ENCODE measurements at regions of chr3 and their contacts with region 1.

Region 1: DNA sequence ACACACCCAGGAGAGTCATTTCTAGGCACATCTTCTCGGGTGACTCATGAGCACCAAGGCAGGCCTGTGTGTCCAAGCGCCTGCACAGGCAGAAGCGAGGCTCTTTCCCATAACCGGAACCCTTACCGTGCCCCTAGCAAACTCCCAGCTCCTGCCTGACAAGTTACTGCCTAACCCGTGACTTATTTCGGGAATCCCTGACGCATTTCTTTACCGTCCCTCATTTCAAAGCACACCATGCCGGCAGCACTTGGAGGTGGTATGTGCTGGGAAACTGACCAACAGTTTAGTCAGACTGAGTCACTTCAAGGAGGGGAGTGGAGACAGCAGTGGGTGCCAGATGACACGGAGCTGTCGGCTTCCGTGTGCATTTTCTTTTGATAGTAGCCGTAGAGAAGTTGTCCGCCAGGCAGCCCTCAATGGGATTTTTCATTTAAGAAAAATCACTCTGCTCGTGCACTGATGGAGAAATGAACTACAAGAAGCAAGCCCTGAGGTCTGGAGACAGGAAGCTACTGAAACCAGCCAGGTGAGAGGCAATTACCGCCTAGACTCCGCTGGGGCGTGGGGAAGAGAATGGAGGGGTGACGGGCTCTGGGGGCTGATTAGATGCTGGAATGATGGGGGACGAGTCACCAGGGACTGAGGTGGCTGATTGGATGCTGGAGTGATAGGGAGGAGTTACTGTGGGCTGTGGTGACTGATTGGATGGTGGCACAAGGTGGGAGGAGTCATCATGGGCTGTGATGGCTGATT is 17.2 kb upstream of the HRH1 start:
- DNase-seq: peak; percentile 73 to 78
- ATAC-seq: peak; percentile 90 to 93 (median 92)
- H3K4me3 ChIP-seq: peak overlapping the region; percentile 8
- H3K27ac ChIP-seq: peak overlapping the region; percentile 51
- H3K4me1 ChIP-seq: no peaks in the 10 kb centered on the region
- H3K27me3 ChIP-seq: peaks cover 0 to 21% (median 2%) of the 10 kb centered on the region in 3 donors
- CTCF ChIP-seq: no peak

Region 2: DNA sequence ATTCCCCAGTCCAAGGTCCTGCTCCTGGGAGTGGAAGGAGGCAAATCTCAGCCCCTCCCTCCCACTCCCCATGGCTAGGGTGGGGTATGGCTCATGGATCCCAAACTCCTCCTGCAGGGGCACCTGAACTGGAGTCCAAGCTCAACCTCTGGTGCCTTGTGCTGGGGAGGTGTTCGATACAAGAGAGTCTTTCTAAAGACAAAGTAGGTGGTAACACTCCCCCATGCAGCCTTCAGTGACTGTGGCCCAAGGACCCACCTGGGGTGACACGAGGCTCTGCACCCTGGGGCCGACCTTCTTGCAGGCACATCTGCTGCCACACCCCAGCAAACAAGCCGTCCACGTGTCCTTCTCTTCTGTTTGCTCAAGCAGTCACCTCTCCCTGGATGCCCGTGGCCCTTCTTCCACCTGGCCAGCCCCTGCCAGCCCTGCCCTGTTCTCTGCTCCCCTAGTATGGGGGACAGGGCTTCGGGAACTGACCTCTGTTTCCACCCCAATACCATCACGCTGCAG is 357.7 kb before region 1 on chr3:
- intact Hi-C with region 1: loop called in 1 of 2 experiments (anchors 5 kb)
- DNase-seq: no peak
- ATAC-seq: no peak
- H3K4me3 ChIP-seq: no peak overlapping the region
- H3K27ac ChIP-seq: no peak overlapping the region
- H3K4me1 ChIP-seq: no peaks in the 10 kb centered on the region
- H3K27me3 ChIP-seq: peaks cover 0 to 13% (median 2%) of the 10 kb centered on the region in 3 donors
- CTCF ChIP-seq: no peak

Region 3: DNA sequence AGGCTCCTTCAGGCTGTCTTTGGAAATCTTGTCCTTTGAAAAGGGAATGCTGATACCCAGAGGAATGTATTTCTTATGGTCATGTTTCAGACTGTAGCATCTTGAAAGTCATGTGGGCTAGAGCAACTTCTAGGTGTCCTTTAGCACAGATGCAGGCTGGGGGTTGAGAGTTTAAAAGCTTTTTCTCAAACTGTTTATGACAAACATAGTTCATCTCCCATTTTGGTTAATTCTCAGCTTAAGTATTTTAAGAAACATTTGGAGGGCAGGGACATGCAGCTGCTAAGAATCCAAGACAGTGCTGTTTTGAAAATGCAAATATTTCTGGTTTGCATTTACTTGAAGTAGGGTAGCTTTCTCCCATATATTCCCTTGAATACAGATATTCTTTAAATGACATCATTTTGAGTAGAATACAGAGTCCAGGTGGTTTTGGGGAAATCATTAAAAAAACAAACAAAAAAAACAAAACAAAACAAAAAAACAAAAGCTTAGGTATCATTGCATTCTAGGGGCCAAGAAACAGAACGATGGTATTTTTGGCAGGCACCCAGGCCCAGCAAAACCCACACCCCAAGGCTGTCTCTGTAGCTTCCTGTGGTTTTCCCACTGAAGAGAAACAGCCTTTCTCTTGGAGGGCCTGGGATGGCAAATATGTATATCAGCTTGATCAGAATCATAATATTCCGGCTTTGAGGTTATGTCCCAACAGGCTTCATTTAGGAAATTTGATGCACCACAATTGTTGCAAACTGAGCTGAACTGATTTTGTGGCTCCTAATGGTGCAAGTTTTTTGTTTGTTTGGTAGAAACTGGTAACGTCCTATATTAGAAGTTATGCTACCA is 255.2 kb after region 1 on chr3:
- intact Hi-C with region 1: no loop called
- DNase-seq: no peak
- ATAC-seq: no peak
- H3K4me3 ChIP-seq: no peak overlapping the region
- H3K27ac ChIP-seq: no peak overlapping the region
- H3K4me1 ChIP-seq: peaks cover 31% of the 10 kb centered on the region
- H3K27me3 ChIP-seq: no peaks in the 10 kb centered on the region
- CTCF ChIP-seq: no peak